Activated T-helper 1 cell treated with anti-CD3 and anti-CD28 coated beads, Interleukin-12 subunit alpha, Interleukin-12 subunit beta, Interleukin-2, Interleukin-4 antibody, amounts not matched to agents 30 ng/mL and 10 ng/mL and 1 ng/mL, durations not matched to agents 14 hours and 24 hours and 36 hours (primary cell): ENCODE measurements at regions of chr16 and their contacts with region 1.

Region 1: GRCh38 chr16:28924732-28925385 is at the start of gene RABEP2:
- DNase-seq: peak; percentile 92
- H3K4me3 Mint-ChIP-seq: peak within 1 kb of the TSS; percentile 97
- H3K27ac Mint-ChIP-seq: peak within 1 kb of the TSS; percentile 99
- H3K4me1 Mint-ChIP-seq: peaks cover 18% of the 10 kb centered on the region
- H3K27me3 Mint-ChIP-seq: no peaks in the 10 kb centered on the region
- total RNA-seq, gene RABEP2: 18.3 and 21.1 TPM in 2 replicates

Region 2: GRCh38 chr16:28823872-28824716 is 100.8 kb before region 1 on chr16:
- intact Hi-C with region 1: loop called (anchors 1 kb)
- DNase-seq: peak; percentile 93
- H3K4me3 Mint-ChIP-seq: peak overlapping the region; percentile 98
- H3K27ac Mint-ChIP-seq: peak overlapping the region; percentile 100
- H3K4me1 Mint-ChIP-seq: peaks cover 52% of the 10 kb centered on the region
- H3K27me3 Mint-ChIP-seq: peaks cover 4% of the 10 kb centered on the region

Region 3: GRCh38 chr16:28863929-28864793 is 60.7 kb before region 1 on chr16:
- intact Hi-C with region 1: loop called (anchors 1 kb)
- DNase-seq: no peak
- H3K4me3 Mint-ChIP-seq: peak overlapping the region; percentile 93
- H3K27ac Mint-ChIP-seq: peak overlapping the region; percentile 94
- H3K4me1 Mint-ChIP-seq: peaks cover 21% of the 10 kb centered on the region
- H3K27me3 Mint-ChIP-seq: no peaks in the 10 kb centered on the region

Region 4: DNA sequence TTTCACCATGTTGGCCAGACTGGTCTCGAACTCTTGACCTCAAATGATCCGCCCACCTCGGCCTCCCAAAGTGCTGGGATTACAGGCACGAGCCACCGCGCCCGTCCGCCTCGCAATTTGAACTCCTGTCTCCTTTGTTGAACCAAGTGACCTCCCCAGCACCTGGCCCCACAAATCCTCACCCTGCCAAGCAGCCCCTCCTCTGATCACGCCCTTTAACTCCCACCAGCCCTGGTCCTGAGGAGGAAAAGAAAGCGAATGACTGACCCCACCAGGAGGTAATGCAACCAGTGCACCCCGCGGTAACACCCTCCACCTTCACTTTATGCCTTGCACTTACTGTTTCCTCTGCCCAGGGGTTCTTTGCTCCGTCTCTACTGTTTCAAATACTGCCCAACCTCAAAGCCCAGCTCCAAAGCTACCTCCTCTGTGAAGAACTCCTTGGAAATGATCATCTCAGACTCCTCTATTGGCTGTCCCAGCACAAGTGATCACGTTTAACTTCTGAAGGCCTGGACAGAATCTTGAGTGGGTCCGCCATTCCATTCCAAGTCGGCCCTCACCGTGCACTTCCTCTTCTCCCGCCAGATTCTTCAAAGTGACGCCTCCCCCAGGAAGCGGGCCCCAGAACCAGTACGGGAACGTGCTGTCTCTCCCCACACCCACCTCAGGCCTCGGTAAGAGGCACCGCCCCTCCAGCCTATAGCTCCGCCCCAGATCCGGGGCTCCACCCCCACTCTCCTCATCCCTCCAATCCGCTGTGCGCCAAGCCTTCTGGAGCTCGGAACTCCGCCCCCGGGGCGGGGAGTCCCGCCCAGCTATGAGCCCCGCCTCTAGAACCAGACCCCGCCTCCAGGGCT is 11.3 kb after region 1 on chr16:
- intact Hi-C with region 1: loop called (anchors 1 kb)
- DNase-seq: peak; percentile 85
- H3K4me3 Mint-ChIP-seq: peak overlapping the region; percentile 62
- H3K27ac Mint-ChIP-seq: peak overlapping the region; percentile 27
- H3K4me1 Mint-ChIP-seq: peaks cover 11% of the 10 kb centered on the region
- H3K27me3 Mint-ChIP-seq: peaks cover 2% of the 10 kb centered on the region

Region 5: GRCh38 chr16:28950648-28951409 is 26.0 kb after region 1 on chr16 and contains the start of gene NFATC2IP:
- intact Hi-C with region 1: loop called (anchors 1 kb)
- DNase-seq: peak; percentile 99
- H3K4me3 Mint-ChIP-seq: peak within 1 kb of the TSS; percentile 95
- H3K27ac Mint-ChIP-seq: peak within 1 kb of the TSS; percentile 95
- H3K4me1 Mint-ChIP-seq: peaks cover 33% of the 10 kb centered on the region
- H3K27me3 Mint-ChIP-seq: no peaks in the 10 kb centered on the region
- total RNA-seq, gene NFATC2IP: 110 and 111 TPM in 2 replicates

Region 6: GRCh38 chr16:28984619-28985135 is 59.8 kb after region 1 on chr16 and contains the start of gene LAT:
- intact Hi-C with region 1: loop called (anchors 2 kb)
- DNase-seq: peak; percentile 72
- H3K4me3 Mint-ChIP-seq: peak within 1 kb of the TSS; percentile 90
- H3K27ac Mint-ChIP-seq: peak within 1 kb of the TSS; percentile 98
- H3K4me1 Mint-ChIP-seq: peaks cover 42% of the 10 kb centered on the region
- H3K27me3 Mint-ChIP-seq: no peaks in the 10 kb centered on the region
- total RNA-seq, gene LAT: 230 and 234 TPM in 2 replicates